Head of caudate nucleus (tissue), 42 donors: ENCODE measurements at regions of chr16 and their contacts with region 1.

Region 1: DNA sequence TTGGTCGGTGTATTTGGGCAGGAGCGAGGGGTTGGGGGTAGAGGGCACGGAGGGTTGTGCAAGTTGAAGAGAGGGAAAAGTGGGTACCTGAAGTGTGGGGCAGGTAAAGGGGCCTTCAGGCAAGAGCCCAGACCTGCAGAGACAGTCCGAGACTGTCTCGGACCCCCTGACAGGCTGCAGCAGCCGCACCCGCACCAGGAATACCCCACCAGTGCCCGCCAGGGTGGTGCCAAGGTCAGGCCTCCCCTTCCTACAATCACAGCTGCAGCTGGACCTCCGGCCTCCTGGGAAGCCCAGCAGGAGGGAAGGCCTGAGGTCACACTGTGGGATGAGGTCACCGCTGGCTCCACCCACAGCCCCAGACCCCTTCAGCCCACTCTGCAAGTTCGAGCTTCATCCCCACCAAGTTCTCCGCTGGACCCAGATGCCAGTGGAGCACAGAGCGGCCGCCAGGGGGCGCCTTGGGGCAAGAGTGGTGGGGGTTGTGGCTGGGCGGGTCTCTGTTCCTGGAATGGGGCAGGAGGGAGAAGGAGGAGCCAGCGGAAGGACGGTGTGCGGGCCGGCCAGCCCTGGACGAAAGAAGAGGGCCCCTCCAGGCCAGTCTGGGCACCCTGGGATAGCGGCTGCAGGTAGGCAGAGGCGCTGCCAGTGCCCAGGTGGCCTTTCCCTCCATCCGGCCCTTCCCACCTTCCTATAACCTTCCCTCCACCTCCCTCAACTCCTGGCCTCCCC is at the start of gene HSD3B7:
- DNase-seq: peak; percentile 69 to 94 (median 87)

Region 2: GRCh38 chr16:31032736-31033708 is 48.2 kb after region 1 on chr16 and contains the start of gene STX4:
- intact Hi-C with region 1: loop called (anchors 10 kb)
- DNase-seq: peak; percentile 95 to 100 (median 98)

Region 3: DNA sequence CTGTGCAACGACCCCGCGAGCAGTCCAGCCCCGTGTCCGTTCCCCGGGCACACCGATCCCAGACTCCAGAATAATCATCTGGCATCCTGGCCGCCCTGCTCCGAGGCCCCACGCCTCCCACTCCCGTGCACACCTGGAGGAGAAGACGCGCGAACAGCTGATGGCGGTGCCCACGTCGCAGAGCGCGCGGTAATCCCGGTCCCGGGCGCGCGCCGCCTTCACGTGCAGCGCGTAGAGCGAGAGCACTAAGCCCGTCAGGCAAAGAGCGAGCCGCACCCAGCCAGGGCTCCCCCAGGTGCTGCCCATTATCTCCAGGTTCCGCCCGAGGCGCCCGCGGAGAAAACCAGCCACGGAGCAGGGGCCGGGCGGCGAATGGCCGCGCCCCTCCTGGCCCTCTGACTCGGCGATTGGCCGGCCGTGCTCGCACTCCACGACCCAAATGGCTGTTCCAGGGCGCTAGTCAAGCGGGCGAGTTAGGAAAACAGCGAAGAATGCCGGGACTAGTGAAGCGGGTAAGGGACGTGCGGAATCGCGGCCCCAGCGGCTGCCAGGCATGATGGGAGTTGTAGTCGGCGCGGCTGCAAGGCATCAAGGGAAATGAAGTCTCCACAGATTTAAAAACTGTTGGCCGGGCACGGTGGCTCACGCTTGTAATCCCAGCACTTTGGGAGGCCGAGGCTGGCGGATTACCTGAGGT is 109.7 kb after region 1 on chr16 and contains the start of gene VKORC1:
- intact Hi-C with region 1: loop called (anchors 10 kb)
- DNase-seq: peak; percentile 88 to 98 (median 95)

Region 4: DNA sequence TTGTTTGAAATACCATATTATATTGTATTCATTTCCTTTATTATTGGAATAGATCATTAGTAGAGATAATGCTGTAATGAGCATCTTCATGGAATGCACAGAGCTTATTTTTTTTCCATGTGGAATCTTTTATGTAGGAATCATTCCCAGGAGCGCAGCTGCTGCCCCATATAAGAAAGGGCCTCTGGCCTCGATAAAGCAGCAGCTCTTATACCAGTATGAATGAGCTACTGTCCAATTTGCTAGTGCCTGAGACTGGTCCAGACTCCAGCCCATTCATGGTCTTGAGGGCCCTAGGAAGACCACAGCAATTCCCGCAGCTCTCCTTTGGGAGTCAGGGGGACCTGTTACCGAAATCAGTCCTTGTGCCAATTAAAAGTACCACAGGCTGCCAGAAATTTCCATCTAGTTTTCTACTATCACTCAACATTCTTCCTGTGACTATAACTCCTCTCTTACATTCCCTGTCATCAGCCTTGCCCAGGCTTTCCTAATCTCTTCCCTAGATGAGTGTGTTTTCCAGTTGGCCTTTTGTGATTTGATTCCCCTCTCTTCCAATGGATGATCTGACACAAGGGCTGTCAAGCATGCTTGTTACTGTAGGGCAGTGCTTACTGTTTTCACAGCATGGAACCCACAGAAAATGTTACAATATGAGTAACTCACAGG is 455.8 kb after region 1 on chr16:
- intact Hi-C with region 1: loop called (anchors 5 kb)
- DNase-seq: peak in 5 of 42 donors; percentile 8 to 44 (median 28)

Region 5: GRCh38 chr16:31868691-31869167 is 883.9 kb after region 1 on chr16:
- intact Hi-C with region 1: loop called (anchors 10 kb)
- DNase-seq: peak; percentile 50 to 96 (median 85)